Caco-2 (cell line): ENCODE measurements at regions of chr19 and their contacts with region 1.

Region 1: DNA sequence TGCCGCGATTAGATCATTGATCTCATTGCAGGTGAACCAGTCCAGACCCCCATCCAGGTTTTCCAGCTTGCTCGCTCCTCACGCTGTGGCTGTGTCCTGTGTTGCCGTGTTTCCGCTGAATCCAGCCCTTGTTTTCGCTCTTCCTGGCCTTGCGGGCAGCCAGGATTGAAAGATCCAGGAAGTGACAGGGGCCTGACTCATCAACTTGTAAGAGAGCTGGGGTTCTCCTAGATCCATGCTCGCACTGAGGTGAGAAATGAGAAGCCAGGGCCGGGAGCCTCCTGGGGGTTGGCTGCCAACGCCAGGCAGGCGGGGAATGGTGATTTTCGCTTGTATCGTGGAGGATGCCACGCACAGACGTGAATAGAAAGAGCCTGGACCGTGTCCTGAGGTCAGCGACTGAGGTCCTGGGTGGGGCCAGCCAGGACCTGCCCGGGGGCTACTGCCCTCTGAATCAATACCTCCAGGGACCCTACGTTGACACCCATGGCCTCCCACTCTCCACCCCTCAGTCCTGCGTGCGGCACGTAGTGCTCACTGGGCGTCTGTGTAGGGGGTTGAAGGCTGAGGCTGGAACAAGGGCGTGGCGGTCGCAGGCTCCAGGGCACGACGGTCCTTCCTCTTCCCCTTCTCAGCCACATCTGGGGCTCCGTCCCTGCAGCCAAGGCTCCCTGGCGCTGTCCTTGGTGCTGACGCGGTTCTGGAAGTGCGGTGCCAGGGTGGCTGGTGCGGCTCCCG is 7.3 kb upstream of the PTPRH start:
- DNase-seq: peak; percentile 93 to 95
- H3K4me3 ChIP-seq: peak overlapping the region; percentile 61
- H3K4me3 Mint-ChIP-seq: peak overlapping the region; percentile 90
- H3K27ac Mint-ChIP-seq: peak overlapping the region; percentile 94
- H3K4me1 ChIP-seq: 0 out of 2 replicates have a peak, but pooled peaks cover 6% of the 10 kb centered on the region
- H3K4me1 Mint-ChIP-seq: no peaks in the 10 kb centered on the region
- H3K27me3 ChIP-seq: no peaks in the 10 kb centered on the region
- H3K27me3 Mint-ChIP-seq: no peaks in the 10 kb centered on the region
- CTCF ChIP-seq: no peak

Region 2: GRCh38 chr19:55178781-55179599 is 37.6 kb before region 1 on chr19:
- CTCF ChIA-PET with region 1: no interaction called
- POLR2A ChIA-PET with region 1: no interaction called
- intact Hi-C with region 1: loop called (anchors 2 kb)
- DNase-seq: peak; percentile 77 to 78
- H3K4me3 ChIP-seq: peak overlapping the region; percentile 20
- H3K4me3 Mint-ChIP-seq: peak overlapping the region; percentile 74
- H3K27ac Mint-ChIP-seq: peak overlapping the region; percentile 40
- H3K4me1 ChIP-seq: peaks cover 17% of the 10 kb centered on the region; the same call in 1 of the 2 replicates
- H3K4me1 Mint-ChIP-seq: peaks cover 18% of the 10 kb centered on the region
- H3K27me3 ChIP-seq: no peaks in the 10 kb centered on the region
- H3K27me3 Mint-ChIP-seq: peaks cover 15% of the 10 kb centered on the region
- CTCF ChIP-seq: no peak

Region 3: DNA sequence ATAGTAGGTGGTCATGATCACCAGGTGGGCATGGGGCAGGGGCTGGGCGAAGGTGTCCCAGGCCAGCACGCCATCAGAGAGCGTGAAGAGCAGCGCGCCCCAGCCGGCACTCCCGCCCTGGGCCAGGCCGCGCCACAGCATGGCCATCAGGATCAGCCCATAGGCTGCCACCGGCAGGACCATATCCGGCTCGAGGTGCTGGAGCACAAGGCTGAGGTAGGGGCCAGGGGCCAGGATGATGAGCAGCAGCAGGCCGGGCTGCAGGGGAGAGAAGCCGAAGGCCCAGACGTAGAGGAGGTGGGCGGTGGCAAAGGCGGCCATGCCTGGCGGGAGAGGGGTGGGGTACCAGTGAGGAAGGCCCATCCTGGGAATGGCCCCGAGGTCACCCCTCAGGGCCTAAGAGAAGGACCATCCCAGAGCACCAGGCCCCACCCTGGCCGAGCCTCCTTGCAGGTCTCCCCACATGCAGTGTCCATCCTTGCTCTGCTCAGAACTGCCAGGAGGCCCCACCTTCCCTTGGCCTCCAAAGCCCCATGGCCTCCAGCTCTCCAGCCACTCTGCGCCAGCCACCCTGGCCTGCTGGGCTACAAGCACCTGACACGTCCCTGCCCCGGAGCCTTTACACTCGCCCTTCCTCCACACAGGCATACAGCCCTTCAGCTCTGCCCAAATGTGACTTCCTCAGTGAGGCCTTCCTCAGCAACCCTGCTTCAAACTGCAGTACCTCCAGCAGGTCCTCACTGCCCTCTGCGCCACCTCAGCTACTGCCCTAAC is 10.8 kb after region 1 on chr19:
- CTCF ChIA-PET with region 1: no interaction called
- POLR2A ChIA-PET with region 1: no interaction called
- intact Hi-C with region 1: loop called (anchors 1 kb)
- DNase-seq: no peak
- H3K4me3 ChIP-seq: peak overlapping the region; percentile 42
- H3K4me3 Mint-ChIP-seq: peak overlapping the region; percentile 60
- H3K27ac Mint-ChIP-seq: peak overlapping the region; percentile 98
- H3K4me1 ChIP-seq: peaks cover 32% of the 10 kb centered on the region
- H3K4me1 Mint-ChIP-seq: peaks cover 35% of the 10 kb centered on the region
- H3K27me3 ChIP-seq: no peaks in the 10 kb centered on the region
- H3K27me3 Mint-ChIP-seq: no peaks in the 10 kb centered on the region
- CTCF ChIP-seq: no peak

Region 4: GRCh38 chr19:55258828-55259539 is 42.4 kb after region 1 on chr19 and contains the start of gene PPP6R1:
- CTCF ChIA-PET with region 1: interaction called, 12 read pairs
- POLR2A ChIA-PET with region 1: interaction called, 16 read pairs
- intact Hi-C with region 1: loop called (anchors 1 kb)
- DNase-seq: peak; percentile 98 to 99
- H3K4me3 ChIP-seq: peak within 1 kb of the TSS; percentile 85
- H3K4me3 Mint-ChIP-seq: peak within 1 kb of the TSS; percentile 94
- H3K27ac Mint-ChIP-seq: peak within 1 kb of the TSS; percentile 81
- H3K4me1 ChIP-seq: peaks cover 23% of the 10 kb centered on the region; the same call in 1 of the 2 replicates
- H3K4me1 Mint-ChIP-seq: peaks cover 23% of the 10 kb centered on the region
- H3K27me3 ChIP-seq: no peaks in the 10 kb centered on the region
- H3K27me3 Mint-ChIP-seq: no peaks in the 10 kb centered on the region
- CTCF ChIP-seq: no peak
- total RNA-seq, gene PPP6R1: 113 and 118 TPM in 2 replicates

Region 5: GRCh38 chr19:55279770-55280643 is 63.4 kb after region 1 on chr19 and contains the start of gene HSPBP1:
- CTCF ChIA-PET with region 1: no interaction called
- POLR2A ChIA-PET with region 1: interaction called, 9 read pairs
- intact Hi-C with region 1: loop called (anchors 1 kb)
- DNase-seq: peak; percentile 99
- H3K4me3 ChIP-seq: peak within 1 kb of the TSS; percentile 50
- H3K4me3 Mint-ChIP-seq: peak within 1 kb of the TSS; percentile 100
- H3K27ac Mint-ChIP-seq: peak within 1 kb of the TSS; percentile 100
- H3K4me1 ChIP-seq: peaks cover 17% of the 10 kb centered on the region
- H3K4me1 Mint-ChIP-seq: peaks cover 19% of the 10 kb centered on the region
- H3K27me3 ChIP-seq: no peaks in the 10 kb centered on the region
- H3K27me3 Mint-ChIP-seq: no peaks in the 10 kb centered on the region
- CTCF ChIP-seq: no peak
- total RNA-seq, gene HSPBP1: 69.6 and 71.4 TPM in 2 replicates

Region 6: DNA sequence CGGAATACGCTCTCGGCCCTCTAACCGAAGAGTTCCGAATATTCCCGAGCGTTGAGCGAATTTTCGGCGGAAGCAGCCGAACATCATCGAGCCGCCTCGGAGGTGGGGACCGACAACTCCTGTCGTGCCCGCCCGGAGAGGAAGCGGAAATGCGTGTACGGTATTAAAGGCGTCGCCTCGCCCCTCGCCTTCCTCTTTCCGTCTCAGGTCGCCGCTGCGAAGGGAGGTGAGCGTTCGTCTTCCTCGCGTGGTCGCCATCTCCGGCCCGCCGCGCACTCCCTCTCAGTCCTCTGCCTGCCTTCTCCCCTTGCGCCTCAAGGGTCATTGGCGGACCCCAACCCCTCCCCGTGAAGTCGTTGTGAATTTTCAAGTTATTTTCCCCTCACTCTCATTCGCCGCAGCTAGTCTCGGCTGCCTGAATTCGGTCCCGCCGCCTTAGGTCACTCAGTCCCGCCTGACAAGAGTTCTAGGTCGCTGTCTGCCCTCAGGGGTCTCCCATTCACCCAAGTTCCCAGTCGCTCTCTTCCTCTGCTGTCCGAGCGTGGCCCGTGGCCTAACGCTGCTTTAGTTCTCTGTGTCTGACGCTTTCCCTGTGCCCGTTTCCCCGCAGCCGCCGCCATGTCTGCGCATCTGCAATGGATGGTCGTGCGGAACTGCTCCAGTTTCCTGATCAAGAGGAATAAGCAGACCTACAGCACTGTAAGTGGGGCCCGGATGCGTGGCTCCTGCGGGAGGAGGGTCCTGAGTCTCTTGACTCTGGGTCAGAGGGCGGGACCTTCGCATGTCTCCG is 169.3 kb after region 1 on chr19 and contains the start of gene RPL28:
- CTCF ChIA-PET with region 1: interaction called, 4 read pairs
- POLR2A ChIA-PET with region 1: interaction called, 3 read pairs
- intact Hi-C with region 1: loop called (anchors 2 kb)
- DNase-seq: peak; percentile 98 to 99
- H3K4me3 ChIP-seq: peak within 1 kb of the TSS; percentile 95
- H3K4me3 Mint-ChIP-seq: peak within 1 kb of the TSS; percentile 93
- H3K27ac Mint-ChIP-seq: peak within 1 kb of the TSS; percentile 89
- H3K4me1 ChIP-seq: peaks cover 30% of the 10 kb centered on the region
- H3K4me1 Mint-ChIP-seq: peaks cover 18% of the 10 kb centered on the region
- H3K27me3 ChIP-seq: no peaks in the 10 kb centered on the region
- H3K27me3 Mint-ChIP-seq: no peaks in the 10 kb centered on the region
- CTCF ChIP-seq: no peak
- total RNA-seq, gene RPL28: 2,048 and 2,146 TPM in 2 replicates

Region 7: GRCh38 chr19:55418185-55418584 is 201.6 kb after region 1 on chr19:
- CTCF ChIA-PET with region 1: no interaction called
- POLR2A ChIA-PET with region 1: no interaction called
- intact Hi-C with region 1: loop called (anchors 1 kb)
- DNase-seq: peak; percentile 77 to 81
- H3K4me3 ChIP-seq: no peak overlapping the region
- H3K4me3 Mint-ChIP-seq: no peak overlapping the region
- H3K27ac Mint-ChIP-seq: no peak overlapping the region
- H3K4me1 ChIP-seq: no peaks in the 10 kb centered on the region
- H3K4me1 Mint-ChIP-seq: peaks cover 6% of the 10 kb centered on the region
- H3K27me3 ChIP-seq: no peaks in the 10 kb centered on the region
- H3K27me3 Mint-ChIP-seq: no peaks in the 10 kb centered on the region
- CTCF ChIP-seq: peak; percentile 76 to 85